Heart right ventricle (tissue), 16 donors: ENCODE measurements at regions of chr15 and their contacts with region 1.

Region 1: DNA sequence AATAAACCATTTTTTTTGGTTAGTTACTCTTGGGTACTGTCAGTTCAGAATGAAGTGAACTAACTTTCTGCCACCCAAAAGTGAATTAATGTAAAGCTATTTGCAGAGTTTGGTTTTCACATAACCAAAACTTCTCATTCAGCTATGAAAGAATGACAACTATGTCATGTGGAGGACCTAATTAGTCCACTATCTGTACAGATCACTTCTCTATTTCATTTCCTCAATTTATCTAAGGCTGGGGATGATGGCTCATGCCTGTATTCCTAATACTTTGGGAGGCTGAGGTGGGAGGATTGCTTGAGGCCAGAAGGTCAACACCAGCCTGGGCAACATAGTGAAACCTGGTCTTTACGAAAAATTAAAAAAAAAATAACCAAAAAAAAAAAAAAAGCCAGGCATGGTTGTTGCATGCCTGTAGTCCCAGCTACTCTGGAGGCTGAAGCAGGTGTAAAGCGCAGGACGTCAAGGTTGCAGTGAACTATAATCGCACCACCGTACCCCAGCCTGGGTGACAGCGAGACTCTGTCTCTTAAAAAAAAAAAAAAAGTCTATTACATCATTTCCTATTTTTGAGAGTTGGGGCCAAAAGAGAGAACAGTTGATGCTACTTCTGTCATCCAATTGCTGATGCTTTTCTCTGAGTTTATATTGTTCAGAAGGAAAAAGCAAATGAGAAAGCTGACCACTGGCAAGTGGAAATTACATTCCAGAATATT is 8.7 kb downstream of the HYPK start:
- DNase-seq: no peak
- ATAC-seq: peak in 2 of 8 donors; percentile 13 to 26
- H3K4me3 ChIP-seq: no peak overlapping the region
- H3K27ac ChIP-seq: peak overlapping the region in 1 of 10 donors; percentile 34
- H3K4me1 ChIP-seq: peaks cover 0 to 16% (median 0%) of the 10 kb centered on the region in 9 donors
- H3K27me3 ChIP-seq: no peaks in the 10 kb centered on the region
- CTCF ChIP-seq: no peak

Region 2: DNA sequence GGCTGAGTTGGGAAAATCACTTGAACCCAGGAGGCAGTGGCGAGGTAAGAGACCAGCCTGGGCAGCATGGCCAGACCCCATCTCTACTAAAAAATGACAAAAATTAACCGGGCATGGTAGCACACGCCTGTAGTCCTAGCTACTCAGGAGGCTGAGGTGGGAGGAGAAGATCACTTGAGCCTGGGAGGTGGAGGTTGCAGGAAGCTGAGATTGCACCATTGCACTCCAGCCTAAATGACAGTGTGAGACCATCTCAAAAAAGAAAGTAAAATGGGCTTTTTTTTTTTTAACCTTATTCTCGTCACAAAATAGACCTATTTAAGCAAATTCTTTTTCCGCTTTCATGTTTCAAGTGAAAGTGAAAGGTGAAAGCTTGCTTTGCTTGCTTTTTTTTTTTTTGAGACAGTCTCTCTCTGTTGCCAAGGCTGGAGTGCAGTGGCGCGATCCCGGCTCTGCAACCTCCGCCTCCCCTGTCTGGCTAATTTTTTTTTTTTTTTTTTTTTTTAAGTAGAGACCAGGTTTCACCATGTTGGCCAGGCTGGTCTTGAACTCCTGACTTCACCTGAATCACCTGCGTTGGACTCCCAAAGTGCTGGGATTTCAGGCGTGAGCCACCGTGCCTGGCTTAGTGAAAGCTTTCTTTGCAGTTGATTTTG is 59.3 kb before region 1 on chr15:
- intact Hi-C with region 1: loop called in 1 of 10 experiments (anchors 5 kb)
- DNase-seq: no peak
- ATAC-seq: no peak
- H3K4me3 ChIP-seq: peak overlapping the region in 5 of 10 donors; percentile 13 to 36 (median 23)
- H3K27ac ChIP-seq: peak overlapping the region in 5 of 10 donors; percentile 3 to 61 (median 19)
- H3K4me1 ChIP-seq: peaks cover 17 to 71% (median 57%) of the 10 kb centered on the region in 9 donors
- H3K27me3 ChIP-seq: no peaks in the 10 kb centered on the region
- CTCF ChIP-seq: no peak